ENCODE measurements at regions of chr5 and their contacts with region 1.

Region 1: DNA sequence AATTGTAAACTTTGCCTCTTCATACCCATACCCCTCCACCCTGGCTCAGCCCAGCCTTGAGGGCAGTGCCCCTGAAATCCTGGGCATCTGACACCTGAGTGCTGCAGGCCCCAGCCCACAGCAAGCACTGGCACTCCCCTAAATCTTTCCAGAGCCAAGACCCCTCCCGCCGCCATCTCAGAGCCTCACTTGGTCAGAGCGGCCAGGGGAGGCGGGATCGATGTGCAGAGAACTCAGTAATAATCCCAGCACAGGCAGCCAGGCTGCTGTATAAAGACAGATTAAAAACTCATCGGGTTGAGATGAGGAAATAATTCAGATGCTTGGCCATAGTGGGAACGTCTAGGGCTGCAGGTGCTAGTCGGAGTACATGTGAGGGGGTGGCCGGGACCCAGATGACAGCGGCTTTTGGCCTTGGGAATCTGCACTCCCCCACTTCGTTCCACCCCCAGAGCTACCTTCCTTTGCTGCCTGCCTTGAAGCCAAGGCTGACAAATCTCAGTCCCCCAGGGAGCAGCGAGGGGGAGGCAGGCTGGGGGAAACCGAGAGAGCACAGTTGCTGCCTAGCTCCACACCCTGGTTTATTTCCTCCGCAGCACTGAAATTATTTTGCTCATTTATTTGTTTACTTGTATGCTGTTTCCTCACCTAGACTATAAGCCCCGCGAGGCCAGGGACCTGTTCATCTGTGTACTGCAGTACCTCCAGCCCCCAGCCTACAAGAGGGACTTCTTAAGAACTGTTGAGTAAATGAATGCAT is 19.5 kb upstream of the ARAP3 start:
- DNase-seq: no peak
- H3K4me3 Mint-ChIP-seq: peak overlapping the region; percentile 58
- H3K27ac Mint-ChIP-seq: no peak overlapping the region
- H3K4me1 Mint-ChIP-seq: peaks cover 2% of the 10 kb centered on the region
- H3K27me3 Mint-ChIP-seq: peaks cover 51% of the 10 kb centered on the region
- CTCF ChIP-seq: no peak

Region 2: DNA sequence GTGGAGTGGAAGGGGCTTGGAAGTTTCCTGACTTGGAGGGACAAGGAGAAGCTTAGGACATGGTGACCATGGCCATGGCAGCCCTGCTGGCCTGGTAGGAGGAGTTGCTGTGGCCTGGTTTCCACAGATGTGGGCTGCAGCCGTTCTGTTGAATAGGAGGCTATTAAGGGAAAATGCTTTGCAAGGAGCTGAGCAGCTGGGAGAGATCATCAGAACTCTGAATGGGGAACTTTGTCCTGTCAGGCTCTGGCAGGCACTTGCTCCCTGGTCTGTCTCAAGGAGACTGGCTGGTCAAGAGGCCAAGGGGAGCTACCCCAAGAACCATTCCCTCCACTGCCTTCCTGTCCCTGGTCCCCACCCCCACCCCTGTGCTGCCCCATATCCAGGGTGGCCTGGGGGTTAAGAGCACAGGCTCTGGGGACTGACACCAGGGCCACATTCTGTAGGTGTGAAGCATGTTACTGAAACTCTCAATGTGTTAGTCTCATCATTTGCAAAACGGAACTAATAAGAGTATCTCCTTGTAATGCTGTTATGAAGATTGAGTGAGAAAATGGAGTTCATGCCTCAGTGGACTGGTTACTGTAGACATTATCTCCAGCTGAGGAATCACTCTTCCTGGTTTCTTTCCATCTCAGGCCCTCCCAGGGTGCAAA is 64.5 kb after region 1 on chr5:
- CTCF ChIA-PET with region 1: no interaction called
- intact Hi-C with region 1: no loop called
- DNase-seq: no peak
- H3K4me3 Mint-ChIP-seq: no peak overlapping the region
- H3K27ac Mint-ChIP-seq: no peak overlapping the region
- H3K4me1 Mint-ChIP-seq: no peaks in the 10 kb centered on the region
- H3K27me3 Mint-ChIP-seq: peaks cover 44% of the 10 kb centered on the region
- CTCF ChIP-seq: no peak

Region 3: DNA sequence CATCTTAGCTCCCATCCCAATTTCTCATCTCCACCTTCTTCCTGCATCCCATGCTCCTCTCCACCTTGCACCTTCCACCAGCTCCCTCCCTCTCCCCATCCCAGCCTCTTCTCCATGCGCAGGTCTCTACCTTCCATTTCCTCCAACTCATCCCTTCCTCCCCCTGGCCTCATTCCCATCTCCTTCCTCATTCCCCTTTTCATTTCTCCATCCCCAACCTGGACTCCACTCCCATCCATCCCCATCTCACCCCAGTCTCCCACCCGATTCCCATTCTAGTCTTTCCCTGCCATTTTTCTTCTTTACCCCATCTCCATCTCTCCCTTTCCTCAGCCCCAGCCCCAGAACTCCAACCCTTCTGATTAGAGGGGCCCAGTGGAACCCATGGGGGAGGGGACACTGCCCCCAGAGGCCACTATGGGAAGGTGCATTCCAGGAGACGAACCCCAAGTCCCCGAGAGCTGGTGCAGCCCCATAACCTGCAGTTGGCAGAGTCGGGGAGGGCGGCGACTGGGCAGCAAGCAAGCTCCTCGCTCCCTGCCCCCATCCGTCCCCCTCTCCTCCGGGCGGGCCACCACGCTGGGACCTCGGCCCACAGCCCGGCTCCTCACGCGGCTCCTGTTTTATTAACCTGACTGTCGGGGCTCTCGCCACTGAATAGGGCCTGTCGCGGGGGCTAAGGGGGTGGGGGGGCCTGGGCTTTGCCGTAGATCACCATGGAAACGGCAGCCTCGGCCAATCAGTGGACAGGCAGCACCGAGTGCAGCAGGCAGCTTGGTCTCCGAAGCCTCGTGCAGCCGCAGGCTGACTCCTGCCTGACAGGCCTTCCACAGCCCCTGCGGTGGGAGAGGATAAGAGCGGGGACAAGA is 110.0 kb after region 1 on chr5:
- CTCF ChIA-PET with region 1: interaction called, 11 read pairs
- intact Hi-C with region 1: loop called (anchors 1 kb)
- DNase-seq: peak; percentile 23
- H3K4me3 Mint-ChIP-seq: no peak overlapping the region
- H3K27ac Mint-ChIP-seq: no peak overlapping the region
- H3K4me1 Mint-ChIP-seq: no peaks in the 10 kb centered on the region
- H3K27me3 Mint-ChIP-seq: peaks cover 40% of the 10 kb centered on the region
- CTCF ChIP-seq: peak; percentile 70